GM12878 (cell line): ENCODE measurements at regions of chr5 and their contacts with region 1.

Region 1: GRCh38 chr5:119340597-119341218 is 15.1 kb upstream of the TNFAIP8 start:
- DNase-seq: peak; percentile 91
- ATAC-seq: peak; percentile 73
- H3K4me3 ChIP-seq: peak overlapping the region; percentile 78
- H3K27ac ChIP-seq: peak overlapping the region; percentile 100
- H3K4me1 ChIP-seq: peaks cover 69% of the 10 kb centered on the region
- H3K27me3 ChIP-seq: no peaks in the 10 kb centered on the region
- CTCF ChIP-seq: 0 out of 6 replicates have a peak, but pooled peaks of 1 of the 3 experiments have one; percentile 20
- EP300 ChIP-seq: peak; percentile 55 to 86; a peak in 3 of 4 replicates
- POLR2A ChIP-seq: peak; percentile 50; the same call in 1 of the 2 replicates
- RAD21 ChIP-seq: peak; percentile 30; the same call in 1 of the 2 replicates

Region 2: GRCh38 chr5:118762291-118762690 is 578.4 kb before region 1 on chr5:
- CTCF ChIA-PET with region 1: no interaction called
- POLR2A ChIA-PET with region 1: no interaction called
- RAD21 ChIA-PET with region 1: no interaction called
- SMC1A ChIA-PET with region 1: no interaction called
- in situ Hi-C with region 1: no loop called
- intact Hi-C with region 1: no loop called
- DNase-seq: no peak
- ATAC-seq: no peak
- H3K4me3 ChIP-seq: no peak overlapping the region
- H3K27ac ChIP-seq: no peak overlapping the region
- H3K4me1 ChIP-seq: no peaks in the 10 kb centered on the region
- H3K27me3 ChIP-seq: no peaks in the 10 kb centered on the region
- CTCF ChIP-seq: no peak
- EP300 ChIP-seq: no peak
- POLR2A ChIP-seq: no peak
- RAD21 ChIP-seq: no peak

Region 3: DNA sequence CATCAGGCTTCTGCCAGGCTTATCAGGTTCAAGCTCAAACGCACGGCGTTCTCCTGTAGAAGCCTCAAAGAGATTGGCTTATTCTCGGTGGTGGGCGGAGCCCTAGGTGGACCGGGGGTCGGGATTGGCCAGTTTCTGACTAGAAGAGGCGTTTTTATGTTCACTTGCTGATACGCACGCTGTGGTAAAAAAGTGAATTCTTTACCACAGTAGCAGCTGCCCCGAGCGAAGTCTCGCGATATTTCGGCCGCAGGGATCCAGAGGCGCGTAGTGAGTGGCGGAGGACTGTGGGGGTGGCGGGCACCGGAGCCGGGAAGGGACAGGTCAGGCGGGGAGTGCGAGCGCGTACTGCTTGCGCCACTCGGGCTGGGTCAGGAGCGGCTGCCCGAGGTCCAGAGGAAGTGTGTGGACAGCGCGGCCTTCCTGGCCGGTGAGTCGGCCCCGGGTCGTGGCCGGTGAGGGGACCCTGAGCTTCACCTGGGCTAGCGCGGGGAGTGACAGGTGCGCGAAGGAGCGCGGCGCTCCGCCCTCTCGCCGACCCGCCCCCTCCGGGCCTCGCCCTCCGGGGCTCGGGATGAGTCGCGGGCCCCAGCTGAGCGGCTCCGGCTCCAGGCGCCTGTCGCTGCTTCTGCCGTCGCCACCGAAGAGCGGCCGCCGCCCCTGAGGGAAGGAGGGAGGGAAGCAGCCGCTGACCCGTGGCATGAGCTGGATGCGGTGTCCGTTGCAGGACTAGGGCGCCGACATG is 269.7 kb before region 1 on chr5 and contains the start of gene DMXL1:
- CTCF ChIA-PET with region 1: interaction called, 3 read pairs
- POLR2A ChIA-PET with region 1: interaction called, 6 read pairs
- RAD21 ChIA-PET with region 1: interaction called, 9 read pairs
- SMC1A ChIA-PET with region 1: interaction called, 8 read pairs
- in situ Hi-C with region 1: no loop called
- intact Hi-C with region 1: loop called (anchors 5 kb)
- DNase-seq: peak; percentile 99
- ATAC-seq: peak; percentile 84
- H3K4me3 ChIP-seq: peak within 1 kb of the TSS; percentile 79
- H3K27ac ChIP-seq: peak within 1 kb of the TSS; percentile 91
- H3K4me1 ChIP-seq: peaks cover 5% of the 10 kb centered on the region
- H3K27me3 ChIP-seq: no peaks in the 10 kb centered on the region
- CTCF ChIP-seq: no peak
- EP300 ChIP-seq: 0 out of 4 replicates have a peak, but pooled peaks of 1 of the 2 experiments have one; percentile 8
- POLR2A ChIP-seq: peak; percentile 91
- RAD21 ChIP-seq: no peak
- polyA plus RNA-seq, gene DMXL1: 9.1 to 11.0 TPM

Region 4: GRCh38 chr5:119274767-119275130 is 66.0 kb before region 1 on chr5:
- CTCF ChIA-PET with region 1: interaction called, 6 read pairs
- POLR2A ChIA-PET with region 1: interaction called, 59 read pairs
- RAD21 ChIA-PET with region 1: interaction called, 22 read pairs
- SMC1A ChIA-PET with region 1: interaction called, 175 read pairs
- in situ Hi-C with region 1: no loop called
- intact Hi-C with region 1: loop called (anchors 2 kb)
- DNase-seq: no peak
- ATAC-seq: peak; percentile 23
- H3K4me3 ChIP-seq: peak overlapping the region; percentile 65; the same call in 1 of the 2 replicates
- H3K27ac ChIP-seq: peak overlapping the region; percentile 77
- H3K4me1 ChIP-seq: peaks cover 66% of the 10 kb centered on the region
- H3K27me3 ChIP-seq: no peaks in the 10 kb centered on the region
- CTCF ChIP-seq: no peak
- EP300 ChIP-seq: no peak
- POLR2A ChIP-seq: no peak
- RAD21 ChIP-seq: no peak

Region 5: GRCh38 chr5:119322948-119323537 is 17.7 kb before region 1 on chr5:
- CTCF ChIA-PET with region 1: interaction called, 17 read pairs
- POLR2A ChIA-PET with region 1: interaction called, 15 read pairs
- RAD21 ChIA-PET with region 1: interaction called, 113 read pairs
- SMC1A ChIA-PET with region 1: interaction called, 318 read pairs
- in situ Hi-C with region 1: no loop called
- intact Hi-C with region 1: no loop called
- DNase-seq: no peak
- ATAC-seq: peak; percentile 64
- H3K4me3 ChIP-seq: peak overlapping the region; percentile 26; the same call in 1 of the 2 replicates
- H3K27ac ChIP-seq: peak overlapping the region; percentile 87
- H3K4me1 ChIP-seq: peaks cover 52% of the 10 kb centered on the region
- H3K27me3 ChIP-seq: no peaks in the 10 kb centered on the region
- CTCF ChIP-seq: no peak
- EP300 ChIP-seq: no peak
- POLR2A ChIP-seq: no peak
- RAD21 ChIP-seq: no peak

Region 6: GRCh38 chr5:119355685-119356611 is 15.2 kb after region 1 on chr5 and contains the start of gene TNFAIP8:
- CTCF ChIA-PET with region 1: interaction called, 187 read pairs
- POLR2A ChIA-PET with region 1: interaction called, 657 read pairs
- RAD21 ChIA-PET with region 1: interaction called, 501 read pairs
- SMC1A ChIA-PET with region 1: interaction called, 1,117 read pairs
- in situ Hi-C with region 1: no loop called
- intact Hi-C with region 1: loop called (anchors 1 kb)
- DNase-seq: no peak
- ATAC-seq: peak; percentile 66
- H3K4me3 ChIP-seq: peak within 1 kb of the TSS; percentile 96
- H3K27ac ChIP-seq: peak within 1 kb of the TSS; percentile 92
- H3K4me1 ChIP-seq: peaks cover 40% of the 10 kb centered on the region
- H3K27me3 ChIP-seq: no peaks in the 10 kb centered on the region
- CTCF ChIP-seq: no peak
- EP300 ChIP-seq: peak in 1 of 2 experiments; percentile 61; a peak in 2 of 4 replicates
- POLR2A ChIP-seq: peak; percentile 74
- RAD21 ChIP-seq: peak; percentile 26; the same call in 1 of the 2 replicates
- polyA plus RNA-seq, gene TNFAIP8: 217 to 324 TPM

Region 7: DNA sequence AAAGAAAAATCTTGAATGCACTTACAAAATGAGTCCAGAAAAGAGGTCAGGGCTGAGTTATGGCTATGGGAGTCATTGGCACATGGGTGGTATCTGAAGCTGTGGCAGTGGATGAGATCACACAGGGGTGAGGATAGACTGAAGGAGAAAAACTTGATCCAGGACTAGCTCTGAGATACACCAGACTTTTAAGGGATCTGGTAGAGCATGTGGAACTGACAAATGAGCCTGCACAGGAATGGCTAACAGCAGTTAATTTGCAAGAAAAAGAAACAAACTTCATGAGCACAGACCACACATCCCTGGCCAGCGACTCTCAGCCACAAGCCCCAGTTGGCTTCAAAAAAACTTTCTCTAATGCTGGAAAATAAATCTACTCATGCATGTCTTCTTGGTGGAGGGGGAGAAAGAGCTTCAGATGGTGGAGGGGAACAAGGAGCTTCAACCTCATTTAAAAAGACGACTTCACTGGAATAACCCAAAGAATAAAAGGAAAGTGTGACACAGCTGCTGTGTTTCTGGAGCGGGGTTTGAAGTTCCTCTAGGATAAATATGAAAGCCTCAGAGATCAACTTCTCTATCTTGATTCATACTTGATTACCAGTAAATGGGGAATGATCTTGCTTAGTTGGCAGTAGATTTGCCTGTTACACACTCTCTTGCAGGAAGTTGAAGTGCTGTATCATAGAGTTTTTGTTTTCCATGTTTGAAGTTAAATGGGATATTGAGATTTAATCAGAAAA is 48.8 kb after region 1 on chr5:
- CTCF ChIA-PET with region 1: interaction called, 4 read pairs
- POLR2A ChIA-PET with region 1: interaction called, 6 read pairs
- RAD21 ChIA-PET with region 1: interaction called, 11 read pairs
- SMC1A ChIA-PET with region 1: interaction called, 583 read pairs
- in situ Hi-C with region 1: no loop called
- intact Hi-C with region 1: no loop called
- DNase-seq: no peak
- ATAC-seq: peak; percentile 42
- H3K4me3 ChIP-seq: peak overlapping the region; percentile 48; the same call in 1 of the 2 replicates
- H3K27ac ChIP-seq: peak overlapping the region; percentile 29
- H3K4me1 ChIP-seq: peaks cover 61% of the 10 kb centered on the region
- H3K27me3 ChIP-seq: no peaks in the 10 kb centered on the region
- CTCF ChIP-seq: no peak
- EP300 ChIP-seq: no peak
- POLR2A ChIP-seq: no peak
- RAD21 ChIP-seq: no peak

Region 8: DNA sequence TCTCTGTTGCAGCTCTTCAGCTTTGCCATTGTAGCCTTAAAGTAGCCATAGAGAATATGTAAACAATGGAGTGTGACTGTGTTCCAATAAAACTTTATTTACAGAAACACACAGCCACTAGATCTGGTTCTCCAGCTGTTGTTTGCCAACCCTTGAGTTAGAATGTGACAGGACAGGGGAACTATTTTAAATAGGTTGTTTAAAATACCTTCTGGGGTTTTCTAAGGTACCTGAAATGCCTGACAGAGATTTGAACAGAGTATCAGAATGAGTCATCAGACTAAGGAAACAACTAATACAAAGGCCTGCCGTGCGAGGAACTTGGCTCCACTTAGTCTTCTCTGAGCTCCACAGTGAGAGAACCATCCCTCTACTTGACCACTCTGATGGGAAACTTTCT is 197.0 kb after region 1 on chr5:
- CTCF ChIA-PET with region 1: no interaction called
- POLR2A ChIA-PET with region 1: no interaction called
- RAD21 ChIA-PET with region 1: no interaction called
- SMC1A ChIA-PET with region 1: no interaction called
- in situ Hi-C with region 1: no loop called
- intact Hi-C with region 1: no loop called
- DNase-seq: peak; percentile 83
- ATAC-seq: peak; percentile 99
- H3K4me3 ChIP-seq: no peak overlapping the region
- H3K27ac ChIP-seq: peak overlapping the region; percentile 71
- H3K4me1 ChIP-seq: peaks cover 12% of the 10 kb centered on the region
- H3K27me3 ChIP-seq: no peaks in the 10 kb centered on the region
- CTCF ChIP-seq: no peak
- EP300 ChIP-seq: peak; percentile 70 to 79; a peak in 3 of 4 replicates
- POLR2A ChIP-seq: no peak
- RAD21 ChIP-seq: 0 out of 2 replicates have a peak, but pooled peaks have one; percentile 22